WTC11 (cell line): ENCODE measurements at regions of chr1 and their contacts with region 1.

Region 1: DNA sequence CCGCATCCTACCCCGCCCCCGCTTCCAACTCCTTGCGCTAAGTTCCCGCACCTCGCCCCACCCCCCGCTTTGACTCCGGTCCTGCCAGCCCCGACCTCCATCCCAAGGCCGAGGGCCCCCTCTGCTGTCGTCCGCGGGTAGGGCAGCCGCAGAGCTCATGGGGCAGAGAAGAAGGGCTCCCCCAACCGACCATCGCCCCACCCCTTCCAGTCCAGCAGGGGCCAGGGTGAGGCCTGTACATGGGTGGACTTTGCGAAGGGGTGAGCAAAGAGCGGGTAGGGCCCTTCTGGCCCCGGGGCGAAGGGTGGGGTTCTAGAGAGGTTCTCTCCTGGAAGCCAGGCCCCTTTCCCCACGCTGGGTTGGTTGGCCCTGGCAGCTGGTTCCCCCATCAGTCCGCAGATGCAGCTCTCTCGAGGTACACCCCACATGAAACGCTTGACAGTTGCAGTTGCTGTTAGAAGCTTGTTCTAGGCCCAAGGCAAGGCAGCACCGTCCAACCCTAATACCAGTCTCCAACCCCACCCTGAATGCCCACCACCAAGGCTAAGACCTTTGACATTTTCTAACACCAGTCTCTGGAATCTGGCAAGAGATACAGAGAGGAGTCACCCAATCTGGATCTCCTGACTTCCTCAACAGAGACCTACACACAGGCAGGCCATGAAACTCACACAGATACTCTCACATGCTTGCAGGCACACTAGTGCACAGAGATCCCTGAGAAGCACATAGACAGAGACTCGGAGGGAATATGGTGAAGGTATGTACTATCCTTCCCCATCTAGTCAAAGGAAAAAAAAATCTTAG is 25.3 kb upstream of the ADGRB2 start:
- DNase-seq: peak; percentile 100
- ATAC-seq: peak; percentile 82
- H3K4me3 Mint-ChIP-seq: peak overlapping the region; percentile 83
- H3K27ac Mint-ChIP-seq: no peak overlapping the region
- H3K4me1 Mint-ChIP-seq: peaks cover 11% of the 10 kb centered on the region
- H3K27me3 Mint-ChIP-seq: no peaks in the 10 kb centered on the region
- CTCF ChIP-seq: peak; percentile 70

Region 2: GRCh38 chr1:31306278-31306677 is 483.2 kb before region 1 on chr1:
- CTCF ChIA-PET with region 1: no interaction called
- POLR2A ChIA-PET with region 1: no interaction called
- DNase-seq: no peak
- ATAC-seq: no peak
- H3K4me3 Mint-ChIP-seq: no peak overlapping the region
- H3K27ac Mint-ChIP-seq: peak overlapping the region; percentile 55
- H3K4me1 Mint-ChIP-seq: peaks cover 18% of the 10 kb centered on the region
- H3K27me3 Mint-ChIP-seq: no peaks in the 10 kb centered on the region
- CTCF ChIP-seq: no peak

Region 3: DNA sequence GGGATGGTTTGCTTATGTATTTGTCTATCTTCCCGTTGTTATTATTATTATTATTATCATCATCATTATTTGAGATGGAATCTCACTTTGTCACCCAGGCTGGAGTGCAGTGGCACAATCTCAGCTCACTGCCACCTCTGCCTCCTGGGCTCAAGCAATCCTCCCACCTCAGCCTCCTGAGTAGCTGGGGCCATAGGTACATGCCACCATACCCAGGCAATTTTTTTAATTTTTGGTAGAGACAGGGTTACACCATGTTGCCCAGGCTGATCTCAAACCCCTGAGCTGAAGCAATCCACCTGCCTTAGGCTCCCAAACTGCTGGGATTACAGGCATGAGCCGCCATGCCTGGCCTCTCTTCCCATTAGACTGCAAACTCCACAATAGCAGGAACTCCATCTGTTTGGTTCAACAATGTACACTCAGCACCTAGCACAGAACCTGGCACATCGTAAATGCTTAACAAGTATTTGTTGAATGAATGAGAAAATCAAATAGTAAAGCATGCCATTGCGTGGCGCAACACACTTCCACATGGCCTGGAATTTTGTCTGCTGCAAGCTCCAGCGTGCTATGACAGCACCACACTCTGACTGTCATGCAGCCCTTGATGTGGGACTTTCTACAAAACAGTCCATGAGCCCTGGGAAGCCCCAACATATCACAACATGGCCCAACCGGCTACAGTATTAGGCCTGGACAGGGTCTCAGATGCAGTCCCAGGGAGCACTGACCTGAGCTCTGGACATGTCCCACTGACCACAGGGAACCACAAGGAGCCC is 216.9 kb before region 1 on chr1:
- CTCF ChIA-PET with region 1: no interaction called
- POLR2A ChIA-PET with region 1: no interaction called
- DNase-seq: no peak
- ATAC-seq: no peak
- H3K4me3 Mint-ChIP-seq: no peak overlapping the region
- H3K27ac Mint-ChIP-seq: no peak overlapping the region
- H3K4me1 Mint-ChIP-seq: peaks cover 18% of the 10 kb centered on the region
- H3K27me3 Mint-ChIP-seq: no peaks in the 10 kb centered on the region; the same call in none of the 2 replicates
- CTCF ChIP-seq: no peak

Region 4: GRCh38 chr1:31644560-31645273 is 144.7 kb before region 1 on chr1 and contains the start of gene PEF1:
- CTCF ChIA-PET with region 1: interaction called, 28 read pairs
- POLR2A ChIA-PET with region 1: no interaction called
- DNase-seq: peak; percentile 99
- ATAC-seq: peak; percentile 80
- H3K4me3 Mint-ChIP-seq: peak within 1 kb of the TSS; percentile 94
- H3K27ac Mint-ChIP-seq: peak within 1 kb of the TSS; percentile 100
- H3K4me1 Mint-ChIP-seq: peaks cover 19% of the 10 kb centered on the region
- H3K27me3 Mint-ChIP-seq: no peaks in the 10 kb centered on the region; the same call in 1 of the 2 replicates
- CTCF ChIP-seq: no peak
- total RNA-seq, gene PEF1: 33.7 to 37.0 TPM (median 35.5 TPM) in 3 replicates

Region 5: GRCh38 chr1:31683997-31684396 is 105.5 kb before region 1 on chr1:
- CTCF ChIA-PET with region 1: interaction called, 19 read pairs
- POLR2A ChIA-PET with region 1: no interaction called
- DNase-seq: peak; percentile 81
- ATAC-seq: peak; percentile 93
- H3K4me3 Mint-ChIP-seq: no peak overlapping the region
- H3K27ac Mint-ChIP-seq: no peak overlapping the region
- H3K4me1 Mint-ChIP-seq: no peaks in the 10 kb centered on the region
- H3K27me3 Mint-ChIP-seq: no peaks in the 10 kb centered on the region; the same call in 1 of the 2 replicates
- CTCF ChIP-seq: peak; percentile 54

Region 6: GRCh38 chr1:31723828-31724359 is 65.6 kb before region 1 on chr1:
- CTCF ChIA-PET with region 1: interaction called, 28 read pairs
- POLR2A ChIA-PET with region 1: no interaction called
- DNase-seq: peak; percentile 94
- ATAC-seq: peak; percentile 49
- H3K4me3 Mint-ChIP-seq: no peak overlapping the region
- H3K27ac Mint-ChIP-seq: no peak overlapping the region
- H3K4me1 Mint-ChIP-seq: peaks cover 16% of the 10 kb centered on the region
- H3K27me3 Mint-ChIP-seq: no peaks in the 10 kb centered on the region; the same call in none of the 2 replicates
- CTCF ChIP-seq: no peak

Region 7: DNA sequence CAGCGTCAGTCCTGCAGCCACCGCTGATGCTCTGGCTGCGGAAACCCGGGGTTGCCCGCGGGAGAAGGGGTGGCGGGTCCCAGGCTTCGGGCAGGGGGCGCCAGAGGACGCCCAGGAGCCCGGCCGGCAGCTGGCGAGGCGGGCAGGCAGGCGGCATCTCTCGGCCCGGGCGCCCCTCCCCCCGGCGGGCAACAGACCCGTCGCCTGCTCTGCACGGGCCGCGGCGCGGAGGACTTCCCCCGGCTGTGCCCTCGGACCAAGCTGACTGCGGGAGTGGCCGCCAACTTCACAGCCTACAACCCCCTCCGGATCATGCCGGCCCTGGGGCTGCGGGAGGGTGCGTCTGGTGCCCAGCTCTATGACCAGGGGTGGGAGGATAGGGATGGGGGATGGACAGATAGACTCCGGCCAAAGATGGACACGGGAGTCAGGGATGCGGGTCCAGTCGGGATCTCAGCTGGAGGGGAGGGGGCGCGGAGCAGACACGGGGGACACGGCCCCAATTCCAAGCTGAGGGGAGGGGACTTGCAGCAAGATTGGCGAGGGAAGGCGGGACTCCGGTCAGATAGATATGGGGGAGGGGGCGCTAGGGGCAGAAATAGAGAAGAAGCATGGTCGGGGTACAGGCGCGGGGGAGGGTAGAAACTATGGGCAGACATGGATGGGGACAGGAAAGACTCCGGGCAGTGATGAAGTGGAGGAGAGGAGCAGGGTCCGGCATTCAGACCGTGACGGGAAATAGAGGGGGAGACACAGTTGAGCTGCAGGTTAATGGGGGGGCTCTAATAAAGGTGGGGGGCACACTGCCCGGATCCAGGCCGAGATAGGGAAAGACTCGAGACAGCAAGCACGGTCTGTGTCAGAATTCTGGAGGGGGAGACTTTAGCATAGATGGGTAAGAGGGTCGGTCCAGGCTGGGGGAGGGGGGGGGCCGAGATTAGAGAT is 26.5 kb before region 1 on chr1:
- CTCF ChIA-PET with region 1: interaction called, 282 read pairs
- POLR2A ChIA-PET with region 1: interaction called, 6 read pairs
- DNase-seq: peak; percentile 88
- ATAC-seq: peak; percentile 36
- H3K4me3 Mint-ChIP-seq: peak overlapping the region; percentile 82
- H3K27ac Mint-ChIP-seq: no peak overlapping the region
- H3K4me1 Mint-ChIP-seq: peaks cover 63% of the 10 kb centered on the region
- H3K27me3 Mint-ChIP-seq: peaks cover 20% of the 10 kb centered on the region
- CTCF ChIP-seq: peak; percentile 82

Region 8: GRCh38 chr1:31955917-31956736 is 166.7 kb after region 1 on chr1:
- CTCF ChIA-PET with region 1: interaction called, 10 read pairs
- POLR2A ChIA-PET with region 1: no interaction called
- DNase-seq: peak; percentile 40
- ATAC-seq: peak; percentile 19
- H3K4me3 Mint-ChIP-seq: no peak overlapping the region
- H3K27ac Mint-ChIP-seq: peak overlapping the region; percentile 92
- H3K4me1 Mint-ChIP-seq: peaks cover 40% of the 10 kb centered on the region
- H3K27me3 Mint-ChIP-seq: peaks cover 2% of the 10 kb centered on the region; the same call in 1 of the 2 replicates
- CTCF ChIP-seq: no peak